CD8-positive, alpha-beta memory T cell (primary cell): ENCODE measurements at regions of chr15 and their contacts with region 1.

Region 1: DNA sequence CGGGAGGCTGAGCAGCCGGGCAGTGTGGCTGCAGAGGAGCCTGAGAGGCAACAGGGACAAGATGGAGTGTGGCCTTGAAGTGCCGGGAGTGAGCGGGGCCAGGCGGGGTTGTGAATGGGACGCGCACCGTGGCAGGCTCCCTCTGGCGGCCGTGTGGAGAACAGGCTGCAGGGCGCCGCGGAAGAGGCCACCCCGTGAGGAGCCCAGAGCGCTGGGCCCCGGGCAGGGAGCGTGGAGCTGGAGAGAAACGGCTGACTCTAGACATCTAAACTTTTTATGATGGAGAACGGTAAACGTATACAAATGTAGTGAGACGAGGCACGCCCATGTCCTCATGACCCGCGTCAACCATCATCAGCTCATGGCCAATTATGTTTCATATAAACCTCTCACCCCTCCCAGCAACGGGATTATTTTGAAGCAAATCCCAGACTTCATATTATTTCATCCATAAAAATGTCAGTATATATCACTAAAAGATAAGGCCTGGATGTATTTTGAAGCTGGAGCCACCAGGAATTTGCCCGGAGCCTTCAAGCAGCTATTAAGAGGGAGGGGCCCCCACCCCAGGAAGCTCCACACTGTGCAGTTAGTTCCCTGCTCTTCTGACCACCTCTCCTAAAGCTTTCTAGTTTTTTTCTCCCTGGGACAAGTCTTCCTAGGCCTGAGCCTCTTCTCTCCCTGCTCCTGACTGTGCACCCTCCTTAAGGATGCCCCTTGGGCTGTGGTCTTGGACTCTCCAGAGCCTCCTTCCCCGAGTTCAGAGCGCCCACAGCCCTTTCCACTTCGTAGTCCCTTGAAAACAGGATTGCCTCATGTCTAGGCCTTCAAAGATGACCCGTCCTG is 149.4 kb downstream of the SMAD6 start:
- DNase-seq: peak; percentile 36 to 72 (median 49)
- H3K4me3 ChIP-seq: no peak overlapping the region
- H3K4me3 Mint-ChIP-seq: peak overlapping the region in 6 of 7 donors; percentile 34 to 63 (median 61)
- H3K27ac ChIP-seq: no peak overlapping the region
- H3K27ac Mint-ChIP-seq: no peak overlapping the region
- H3K4me1 ChIP-seq: no peaks in the 10 kb centered on the region
- H3K4me1 Mint-ChIP-seq: peaks cover 6 to 11% (median 11%) of the 10 kb centered on the region in 3 donors
- H3K27me3 ChIP-seq: no peaks in the 10 kb centered on the region
- H3K27me3 Mint-ChIP-seq: peaks cover 12 to 35% of the 10 kb centered on the region in 2 donors

Region 2: GRCh38 chr15:66202526-66202925 is 648.9 kb before region 1 on chr15:
- CTCF ChIA-PET with region 1: no interaction called
- POLR2A ChIA-PET with region 1: no interaction called
- DNase-seq: no peak
- H3K4me3 ChIP-seq: no peak overlapping the region
- H3K4me3 Mint-ChIP-seq: no peak overlapping the region
- H3K27ac ChIP-seq: no peak overlapping the region
- H3K27ac Mint-ChIP-seq: no peak overlapping the region
- H3K4me1 ChIP-seq: no peaks in the 10 kb centered on the region
- H3K4me1 Mint-ChIP-seq: no peaks in the 10 kb centered on the region
- H3K27me3 ChIP-seq: no peaks in the 10 kb centered on the region
- H3K27me3 Mint-ChIP-seq: peaks cover 10 to 42% of the 10 kb centered on the region in 2 donors

Region 3: DNA sequence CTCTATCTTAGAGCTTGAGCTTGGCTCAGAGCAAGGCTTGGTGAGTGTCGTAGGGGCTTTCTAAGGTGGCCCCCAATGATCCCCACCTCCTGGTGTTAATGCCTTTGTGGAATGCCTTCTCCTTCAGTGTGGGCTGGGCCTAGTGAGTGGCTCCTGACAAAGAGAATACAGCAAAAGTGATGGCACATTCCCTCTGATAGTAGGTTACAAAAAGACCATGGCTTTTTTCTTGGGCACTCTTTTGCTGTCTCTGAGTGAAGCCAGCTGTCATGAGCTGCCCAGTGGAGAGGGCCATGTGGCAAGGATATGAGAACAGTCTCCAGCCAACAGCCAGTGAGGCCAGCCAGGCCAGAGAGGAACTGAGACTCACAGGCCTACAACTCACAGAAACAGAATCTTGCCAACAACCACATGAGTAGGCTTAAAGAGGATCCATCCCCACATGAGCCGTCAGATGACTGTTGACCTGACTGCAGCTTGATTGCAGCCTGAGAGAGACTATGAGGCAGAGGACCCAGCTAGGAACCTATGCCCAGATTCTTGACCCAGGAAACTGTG is 16.0 kb before region 1 on chr15:
- CTCF ChIA-PET with region 1: interaction called, 10 read pairs
- POLR2A ChIA-PET with region 1: no interaction called
- DNase-seq: no peak
- H3K4me3 ChIP-seq: no peak overlapping the region
- H3K4me3 Mint-ChIP-seq: no peak overlapping the region
- H3K27ac ChIP-seq: no peak overlapping the region
- H3K27ac Mint-ChIP-seq: no peak overlapping the region
- H3K4me1 ChIP-seq: no peaks in the 10 kb centered on the region
- H3K4me1 Mint-ChIP-seq: no peaks in the 10 kb centered on the region
- H3K27me3 ChIP-seq: no peaks in the 10 kb centered on the region
- H3K27me3 Mint-ChIP-seq: peaks cover 2 to 10% of the 10 kb centered on the region in 2 donors